ENCODE measurements at regions of chr15 and their contacts with region 1.

Region 1: DNA sequence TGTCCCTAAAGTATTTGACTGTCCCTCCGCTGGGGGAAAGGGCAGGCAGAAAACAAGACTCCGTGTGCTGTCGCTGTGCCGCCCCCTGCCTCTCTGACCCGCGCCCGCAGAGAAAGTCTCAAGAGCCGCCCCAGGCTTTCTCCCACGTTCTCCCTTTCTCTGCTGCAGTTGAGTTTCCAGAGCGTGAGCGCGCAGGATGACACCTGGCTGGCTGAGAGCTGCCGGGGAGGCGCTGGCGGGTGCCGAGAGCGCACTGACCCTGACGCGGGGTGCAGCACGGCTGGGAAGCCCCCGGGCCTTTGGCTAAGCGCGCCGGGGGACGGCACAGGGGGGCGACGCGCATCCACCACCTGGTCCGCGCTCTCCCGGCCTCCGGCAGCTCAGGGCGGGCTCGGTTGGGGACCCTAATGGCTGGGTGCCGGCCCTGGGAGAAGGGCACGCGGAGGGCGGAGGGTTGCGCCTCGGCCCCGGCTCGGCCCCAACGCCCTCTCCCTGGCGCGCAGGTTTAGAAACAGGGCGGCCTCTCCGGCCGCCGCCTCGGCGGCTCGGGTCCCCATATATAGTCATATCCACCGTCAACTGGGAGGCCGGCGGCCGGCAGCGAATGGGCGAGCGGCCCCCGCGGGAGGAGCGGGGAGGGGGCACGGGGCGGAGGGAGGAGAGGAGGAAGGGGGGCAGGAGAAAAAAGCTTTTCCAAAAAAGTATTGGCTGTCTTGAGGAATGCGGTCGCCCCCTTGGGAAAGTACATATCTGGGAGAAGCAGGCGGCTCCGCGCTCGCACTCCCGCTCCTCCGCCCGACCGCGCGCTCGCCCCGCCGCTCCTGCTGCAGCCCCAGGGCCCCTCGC is at the start of gene TPM1:
- DNase-seq: peak; percentile 77
- H3K4me3 ChIP-seq: peak within 1 kb of the TSS; percentile 94
- H3K27ac ChIP-seq: peak within 1 kb of the TSS; percentile 74
- H3K27me3 ChIP-seq: no peaks in the 10 kb centered on the region
- CTCF ChIP-seq: no peak
- polyA plus RNA-seq, gene TPM1: 1,162 and 1,348 TPM in 2 replicates

Region 2: DNA sequence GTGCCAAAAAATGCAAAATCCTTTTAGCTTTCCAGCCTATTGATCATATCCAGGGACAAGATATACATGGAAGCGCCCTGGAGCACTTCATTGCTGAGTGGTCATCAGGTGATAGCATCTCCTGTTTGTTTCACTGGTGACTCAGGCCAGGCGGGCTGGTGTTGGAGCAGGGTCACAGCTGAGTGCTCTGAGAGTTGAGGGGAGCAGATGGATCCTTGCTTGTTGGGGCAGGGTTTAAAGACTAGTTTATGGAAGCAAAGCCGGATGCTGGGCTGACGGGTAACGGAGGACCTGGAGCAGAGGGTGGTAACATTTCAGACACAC is 404.7 kb before region 1 on chr15:
- CTCF ChIA-PET with region 1: no interaction called
- POLR2A ChIA-PET with region 1: no interaction called
- DNase-seq: no peak
- H3K4me3 ChIP-seq: no peak overlapping the region
- H3K27ac ChIP-seq: no peak overlapping the region
- H3K27me3 ChIP-seq: no peaks in the 10 kb centered on the region
- CTCF ChIP-seq: no peak

Region 3: GRCh38 chr15:63023351-63023945 is 18.7 kb before region 1 on chr15:
- CTCF ChIA-PET with region 1: interaction called, 11 read pairs
- POLR2A ChIA-PET with region 1: interaction called, 11 read pairs
- DNase-seq: no peak
- H3K4me3 ChIP-seq: no peak overlapping the region
- H3K27ac ChIP-seq: peak overlapping the region; percentile 57
- H3K27me3 ChIP-seq: no peaks in the 10 kb centered on the region
- CTCF ChIP-seq: no peak

Region 4: GRCh38 chr15:63030101-63030551 is 12.1 kb before region 1 on chr15:
- CTCF ChIA-PET with region 1: interaction called, 6 read pairs
- POLR2A ChIA-PET with region 1: interaction called, 14 read pairs
- DNase-seq: no peak
- H3K4me3 ChIP-seq: no peak overlapping the region
- H3K27ac ChIP-seq: no peak overlapping the region
- H3K27me3 ChIP-seq: no peaks in the 10 kb centered on the region
- CTCF ChIP-seq: no peak

Region 5: DNA sequence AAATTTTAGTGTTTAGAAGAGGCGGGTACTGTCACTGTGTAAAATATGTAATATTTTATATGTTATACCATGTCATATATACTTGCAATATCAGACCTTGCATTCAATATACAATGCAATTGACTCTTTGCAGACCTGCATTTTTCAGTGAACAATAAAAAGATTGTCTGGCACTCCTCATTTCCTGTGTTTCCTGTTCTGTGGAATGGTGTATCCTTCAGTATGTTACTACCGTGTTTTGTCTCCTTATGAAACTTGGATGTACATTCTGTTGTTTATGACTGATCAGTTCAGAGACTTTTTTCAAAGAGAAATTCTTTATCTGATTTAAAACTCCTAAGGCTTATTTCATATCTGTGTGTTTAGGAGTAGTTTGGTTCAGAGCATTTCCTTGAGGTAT is 266.8 kb after region 1 on chr15:
- CTCF ChIA-PET with region 1: no interaction called
- POLR2A ChIA-PET with region 1: no interaction called
- DNase-seq: no peak
- H3K4me3 ChIP-seq: no peak overlapping the region
- H3K27ac ChIP-seq: no peak overlapping the region
- H3K27me3 ChIP-seq: no peaks in the 10 kb centered on the region
- CTCF ChIP-seq: no peak

Measured in AG04450 (cell line).